Mammary epithelial cell (primary cell): ENCODE measurements at regions of chr14 and their contacts with region 1.

Region 1: GRCh38 chr14:24146978-24147760 is at the start of gene RNF31:
- DNase-seq: peak; percentile 98
- H3K4me3 ChIP-seq: peak within 1 kb of the TSS; percentile 75 to 93 (median 90)
- H3K27ac ChIP-seq: peak within 1 kb of the TSS; percentile 80
- H3K4me1 ChIP-seq: peaks cover 15% of the 10 kb centered on the region
- H3K27me3 ChIP-seq: no peaks in the 10 kb centered on the region
- CTCF ChIP-seq: no peak
- total RNA-seq, gene RNF31: 35.3 to 52.1 TPM

Region 2: GRCh38 chr14:23903442-23903841 is 243.7 kb before region 1 on chr14:
- CTCF ChIA-PET with region 1: no interaction called
- dilution Hi-C with region 1: no loop called
- in situ Hi-C with region 1: no loop called
- intact Hi-C with region 1: no loop called
- DNase-seq: no peak
- H3K4me3 ChIP-seq: no peak overlapping the region
- H3K27ac ChIP-seq: no peak overlapping the region
- H3K4me1 ChIP-seq: no peaks in the 10 kb centered on the region
- H3K27me3 ChIP-seq: no peaks in the 10 kb centered on the region
- CTCF ChIP-seq: no peak

Region 3: GRCh38 chr14:24093901-24094761 is 53.0 kb before region 1 on chr14 and contains the start of gene PCK2:
- CTCF ChIA-PET with region 1: no interaction called
- dilution Hi-C with region 1: no loop called
- in situ Hi-C with region 1: no loop called
- intact Hi-C with region 1: loop called (anchors 1 kb)
- DNase-seq: peak; percentile 88
- H3K4me3 ChIP-seq: peak within 1 kb of the TSS; percentile 67 to 86 (median 77)
- H3K27ac ChIP-seq: peak within 1 kb of the TSS; percentile 54
- H3K4me1 ChIP-seq: peaks cover 12% of the 10 kb centered on the region
- H3K27me3 ChIP-seq: no peaks in the 10 kb centered on the region
- CTCF ChIP-seq: peak in 1 of 2 donors; percentile 6
- total RNA-seq, gene PCK2: 55.5 to 129 TPM

Region 4: DNA sequence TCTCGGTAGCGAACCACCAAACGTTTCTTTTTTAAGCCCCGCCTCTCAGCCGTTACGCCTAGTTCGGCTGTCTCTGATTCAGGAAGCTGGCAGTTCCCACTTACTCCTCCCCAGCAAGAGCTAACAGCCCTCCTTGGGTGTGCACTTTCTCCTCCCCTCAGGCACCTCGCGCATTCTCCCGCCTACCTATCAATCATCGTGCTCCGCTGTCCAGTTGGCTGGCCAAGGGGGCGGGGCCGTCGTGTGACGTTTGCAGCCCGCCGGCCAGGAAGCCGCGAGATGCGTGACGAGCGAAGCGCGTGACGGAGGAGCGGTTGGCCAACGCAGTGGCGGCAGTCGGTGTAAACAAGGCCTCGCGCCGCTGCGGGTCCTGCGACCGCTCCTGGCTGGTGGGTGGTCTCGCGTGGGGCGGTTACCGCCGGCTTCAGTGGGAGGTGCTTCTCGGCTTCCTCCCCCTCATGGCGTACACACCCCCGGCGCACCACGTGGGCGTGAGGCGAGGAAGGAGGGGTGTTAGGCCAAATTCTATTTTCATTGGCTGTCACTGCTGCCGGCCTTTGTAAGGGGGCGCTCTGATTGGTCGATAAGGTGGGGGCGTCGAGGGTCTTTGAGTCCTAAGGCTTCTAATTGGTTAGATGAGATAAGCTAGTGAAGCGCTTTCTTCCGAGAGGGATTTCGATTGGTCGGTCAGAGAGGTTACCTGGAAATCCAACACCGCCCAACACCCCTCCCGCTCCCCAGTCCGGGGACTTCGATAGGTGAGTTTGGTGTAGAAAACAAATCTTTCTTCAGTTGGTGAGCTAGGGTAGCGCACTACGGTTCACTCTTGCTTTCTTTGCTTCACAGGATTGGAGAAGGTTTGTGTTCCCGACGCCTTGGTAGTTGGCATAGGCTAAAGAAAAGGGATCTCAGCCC is 32.4 kb before region 1 on chr14 and contains the starts of genes DCAF11 and NRL:
- CTCF ChIA-PET with region 1: no interaction called
- dilution Hi-C with region 1: no loop called
- in situ Hi-C with region 1: no loop called
- intact Hi-C with region 1: loop called (anchors 1 kb)
- DNase-seq: peak; percentile 100
- H3K4me3 ChIP-seq: peak within 1 kb of the TSS; percentile 63 to 96 (median 74)
- H3K27ac ChIP-seq: peak within 1 kb of the TSS; percentile 91
- H3K4me1 ChIP-seq: peaks cover 16% of the 10 kb centered on the region
- H3K27me3 ChIP-seq: no peaks in the 10 kb centered on the region
- CTCF ChIP-seq: no peak
- total RNA-seq, gene DCAF11: 38.4 to 55.7 TPM
- total RNA-seq, gene NRL: 1.1 to 1.5 TPM

Region 5: DNA sequence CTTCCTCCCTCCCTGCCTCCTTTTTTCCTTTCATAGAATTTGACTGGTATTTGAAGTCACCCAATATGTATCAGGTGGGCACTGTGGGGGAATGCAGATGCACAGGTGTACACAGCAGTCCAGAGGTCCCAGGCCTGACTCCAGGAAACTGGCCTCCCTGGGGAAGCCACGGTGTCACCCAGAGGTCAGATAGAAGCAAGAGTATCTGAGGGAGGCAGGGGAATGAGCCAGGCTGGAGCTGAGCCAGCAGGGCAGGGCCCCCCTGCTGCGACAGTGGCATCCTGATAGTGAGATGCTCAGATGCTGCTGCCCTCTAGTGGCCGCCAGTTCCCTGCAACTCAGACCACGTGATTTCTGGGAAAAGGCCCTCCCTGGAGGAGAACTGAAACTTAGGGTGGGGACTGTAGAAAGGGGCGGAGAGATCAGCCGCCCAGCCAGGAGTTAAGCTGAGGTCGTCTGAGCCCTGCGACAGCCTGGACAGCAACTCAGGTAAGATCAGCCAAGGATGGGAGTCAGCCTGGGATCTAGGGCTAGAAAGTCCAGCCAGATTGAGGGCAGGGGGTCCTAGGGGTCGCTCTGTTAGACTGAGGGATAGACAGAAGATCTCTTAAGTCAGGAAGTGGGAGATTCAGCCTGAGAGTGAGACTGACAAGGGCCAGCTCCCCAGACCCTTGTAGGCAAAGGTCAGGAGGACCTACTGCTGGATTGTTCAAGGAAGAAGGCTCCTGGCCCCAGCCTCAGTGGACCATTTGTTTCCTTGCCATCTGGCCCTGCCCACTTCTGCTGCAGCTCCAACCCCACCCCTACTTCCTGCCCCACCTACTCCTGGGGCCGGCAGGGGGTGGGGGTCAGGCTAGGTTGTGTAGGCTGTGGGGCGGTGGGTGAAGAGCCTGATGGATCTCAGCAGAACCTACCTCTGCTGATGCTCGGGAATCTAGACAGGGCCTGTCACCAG is 14.0 kb after region 1 on chr14 and contains the start of gene IRF9:
- CTCF ChIA-PET with region 1: interaction called, 4 read pairs
- dilution Hi-C with region 1: no loop called
- in situ Hi-C with region 1: no loop called
- intact Hi-C with region 1: loop called (anchors 2 kb)
- DNase-seq: peak; percentile 83
- H3K4me3 ChIP-seq: peak within 1 kb of the TSS; percentile 58 to 67 (median 58)
- H3K27ac ChIP-seq: peak within 1 kb of the TSS; percentile 46
- H3K4me1 ChIP-seq: peaks cover 9% of the 10 kb centered on the region
- H3K27me3 ChIP-seq: no peaks in the 10 kb centered on the region
- CTCF ChIP-seq: peak; percentile 93 to 98
- total RNA-seq, gene IRF9: 43.0 to 45.7 TPM